MCF 10A (cell line): ENCODE measurements at regions of chr3 and their contacts with region 1.

Region 1: GRCh38 chr3:150763122-150763841 is at the start of gene SIAH2:
- DNase-seq: peak; percentile 93
- H3K4me3 Mint-ChIP-seq: peak within 1 kb of the TSS; percentile 91
- H3K27ac Mint-ChIP-seq: peak within 1 kb of the TSS; percentile 97
- H3K4me1 Mint-ChIP-seq: peaks cover 29% of the 10 kb centered on the region
- H3K27me3 Mint-ChIP-seq: no peaks in the 10 kb centered on the region
- CTCF ChIP-seq: no peak
- total RNA-seq, gene SIAH2: 20.0 and 35.4 TPM in 2 replicates

Region 2: DNA sequence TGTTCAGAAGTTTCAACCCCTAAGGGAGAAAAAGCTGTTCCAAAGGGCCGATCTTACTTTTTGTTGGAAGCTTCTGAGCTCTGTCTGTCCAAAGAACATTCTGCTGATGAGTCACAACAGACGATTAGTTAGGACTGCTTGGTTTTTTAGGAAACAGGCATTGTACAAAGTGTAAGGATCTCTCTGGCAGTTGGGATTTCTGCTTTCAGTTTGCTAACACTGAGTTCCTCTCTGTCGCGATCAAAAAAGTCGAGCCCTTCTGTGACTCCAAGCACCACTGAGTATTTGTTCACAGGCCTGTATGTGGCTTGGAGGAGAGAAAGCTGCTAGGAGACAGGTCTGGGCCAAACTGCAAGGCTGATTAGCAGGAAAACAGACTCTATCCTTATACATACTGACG is 700.8 kb before region 1 on chr3:
- CTCF ChIA-PET with region 1: no interaction called
- POLR2A ChIA-PET with region 1: no interaction called
- intact Hi-C with region 1: no loop called
- DNase-seq: peak; percentile 35
- H3K4me3 Mint-ChIP-seq: peak overlapping the region; percentile 35
- H3K27ac Mint-ChIP-seq: peak overlapping the region; percentile 37
- H3K4me1 Mint-ChIP-seq: peaks cover 7% of the 10 kb centered on the region
- H3K27me3 Mint-ChIP-seq: peaks cover 16% of the 10 kb centered on the region
- CTCF ChIP-seq: no peak

Region 3: GRCh38 chr3:150603153-150603979 is 159.9 kb before region 1 on chr3 and contains the start of gene SELENOT:
- CTCF ChIA-PET with region 1: interaction called, 3 read pairs
- POLR2A ChIA-PET with region 1: interaction called, 32 read pairs
- intact Hi-C with region 1: loop called (anchors 5 kb)
- DNase-seq: peak; percentile 97
- H3K4me3 Mint-ChIP-seq: peak within 1 kb of the TSS; percentile 92
- H3K27ac Mint-ChIP-seq: peak within 1 kb of the TSS; percentile 93
- H3K4me1 Mint-ChIP-seq: peaks cover 39% of the 10 kb centered on the region
- H3K27me3 Mint-ChIP-seq: no peaks in the 10 kb centered on the region
- CTCF ChIP-seq: peak; percentile 13
- total RNA-seq, gene SELENOT: 71.1 and 80.7 TPM in 2 replicates

Region 4: DNA sequence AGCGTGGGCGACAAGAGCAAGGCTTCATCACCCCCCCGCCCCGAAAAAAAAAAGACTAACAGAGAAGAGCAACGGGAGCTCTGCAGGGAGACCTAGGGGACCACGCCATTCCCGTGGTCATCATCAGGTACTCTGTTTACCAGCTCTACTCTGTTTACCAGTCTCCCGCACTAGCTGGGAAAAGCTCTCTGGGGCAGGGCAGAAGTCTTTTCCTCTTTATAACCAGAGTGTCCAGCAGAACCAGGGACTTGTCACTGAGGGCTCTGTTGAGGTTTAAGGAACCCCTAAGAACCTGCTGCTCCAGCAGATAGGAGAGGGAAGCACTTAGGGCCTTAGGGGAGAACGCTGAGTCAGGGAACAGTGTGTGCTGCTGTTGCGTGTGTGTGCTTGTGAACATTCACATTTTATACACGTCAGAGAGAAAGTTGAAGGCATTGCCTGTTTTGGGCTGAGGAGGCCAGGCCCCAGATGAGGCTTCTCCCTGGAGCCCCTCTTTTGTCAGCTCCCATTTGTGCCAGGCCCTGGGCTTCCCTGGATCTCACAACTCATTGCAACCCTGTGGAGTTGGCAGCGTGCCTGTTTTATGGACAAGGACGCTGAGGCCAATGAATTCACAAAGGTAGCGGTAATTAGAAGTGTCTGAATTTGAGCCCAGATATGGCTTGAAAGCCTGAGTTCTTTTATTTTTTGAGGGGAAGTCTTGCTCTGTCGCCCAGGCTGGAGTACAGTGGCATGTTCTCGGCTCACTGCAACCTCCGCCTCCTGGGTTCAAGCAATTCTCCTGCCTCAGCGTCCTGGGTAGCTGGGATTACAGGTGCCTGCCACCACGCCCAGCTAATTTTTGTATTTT is 35.4 kb before region 1 on chr3:
- CTCF ChIA-PET with region 1: interaction called, 59 read pairs
- POLR2A ChIA-PET with region 1: interaction called, 70 read pairs
- intact Hi-C with region 1: no loop called
- DNase-seq: peak; percentile 51
- H3K4me3 Mint-ChIP-seq: no peak overlapping the region
- H3K27ac Mint-ChIP-seq: no peak overlapping the region
- H3K4me1 Mint-ChIP-seq: peaks cover 14% of the 10 kb centered on the region
- H3K27me3 Mint-ChIP-seq: no peaks in the 10 kb centered on the region
- CTCF ChIP-seq: no peak

Region 5: DNA sequence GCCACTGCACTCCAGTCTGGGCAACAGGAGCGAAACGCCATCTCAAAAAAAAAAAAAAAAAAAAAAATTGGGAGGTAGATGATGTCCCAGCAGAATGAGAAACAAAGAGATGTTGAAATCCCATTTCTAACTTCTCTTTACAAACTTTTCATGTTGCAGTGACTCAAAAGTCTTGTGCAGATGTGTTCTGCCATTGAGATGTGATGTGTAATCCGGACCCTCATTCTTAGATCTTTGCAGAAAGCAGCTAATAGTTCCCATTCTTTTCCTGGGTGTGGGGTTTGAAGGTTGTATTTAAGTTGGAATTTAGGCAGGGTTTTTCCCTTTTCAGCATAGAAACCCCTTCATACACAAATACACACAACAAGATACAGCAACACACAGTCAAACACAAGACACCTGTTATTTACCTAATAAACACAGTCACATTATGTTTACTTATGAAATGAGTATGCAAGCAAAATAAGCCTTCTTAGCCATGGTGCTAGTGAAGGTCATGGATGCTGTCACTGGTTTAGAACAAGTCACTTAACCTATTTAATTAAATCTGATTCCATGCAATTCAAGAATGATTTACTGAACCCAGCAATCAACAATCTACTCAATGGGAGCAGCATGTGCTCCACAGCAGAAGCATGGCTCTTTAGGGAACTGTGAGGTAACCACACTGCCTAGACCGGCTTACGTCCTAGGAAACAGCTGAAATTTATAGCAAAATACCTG is 15.2 kb before region 1 on chr3:
- CTCF ChIA-PET with region 1: interaction called, 3 read pairs
- POLR2A ChIA-PET with region 1: interaction called, 12 read pairs
- intact Hi-C with region 1: no loop called
- DNase-seq: no peak
- H3K4me3 Mint-ChIP-seq: no peak overlapping the region
- H3K27ac Mint-ChIP-seq: no peak overlapping the region
- H3K4me1 Mint-ChIP-seq: peaks cover 49% of the 10 kb centered on the region
- H3K27me3 Mint-ChIP-seq: no peaks in the 10 kb centered on the region
- CTCF ChIP-seq: no peak

Region 6: GRCh38 chr3:150787741-150788370 is 24.6 kb after region 1 on chr3:
- CTCF ChIA-PET with region 1: interaction called, 17 read pairs
- POLR2A ChIA-PET with region 1: interaction called, 10 read pairs
- intact Hi-C with region 1: no loop called
- DNase-seq: peak; percentile 57
- H3K4me3 Mint-ChIP-seq: no peak overlapping the region
- H3K27ac Mint-ChIP-seq: no peak overlapping the region
- H3K4me1 Mint-ChIP-seq: peaks cover 8% of the 10 kb centered on the region
- H3K27me3 Mint-ChIP-seq: no peaks in the 10 kb centered on the region
- CTCF ChIP-seq: peak; percentile 52

Region 7: DNA sequence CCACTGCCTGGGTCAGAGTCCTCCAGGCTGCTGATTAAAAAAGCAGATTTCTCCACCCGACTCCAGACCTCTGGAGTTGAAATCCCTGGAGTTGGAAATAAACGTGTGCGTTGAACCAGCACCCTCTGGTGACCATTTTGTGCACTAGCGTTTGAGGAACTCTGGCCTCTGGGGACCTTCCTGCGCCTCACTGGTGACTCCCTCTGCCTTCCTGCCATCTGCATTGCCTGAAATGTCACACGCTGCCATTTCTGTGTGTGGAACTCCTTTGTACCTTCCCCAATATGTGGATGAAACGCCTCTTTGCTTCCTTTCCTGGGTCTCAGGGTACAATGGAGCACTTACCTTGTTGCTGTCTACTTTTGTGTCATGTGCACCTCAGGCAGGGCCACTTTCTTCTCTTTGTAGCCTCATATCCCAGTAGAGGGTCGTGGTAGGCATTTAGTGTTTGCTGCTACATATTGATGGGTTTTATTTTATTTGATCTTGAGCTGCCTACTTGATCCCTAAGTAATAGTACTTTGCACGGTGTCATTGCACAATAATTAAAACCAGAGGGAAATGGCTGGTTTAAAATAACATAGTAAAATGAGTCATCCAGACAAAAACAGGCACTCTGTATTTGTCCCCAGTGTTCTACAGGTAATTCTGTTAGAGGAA is 382.9 kb after region 1 on chr3:
- CTCF ChIA-PET with region 1: interaction called, 8 read pairs
- POLR2A ChIA-PET with region 1: interaction called, 4 read pairs
- intact Hi-C with region 1: loop called (anchors 1 kb)
- DNase-seq: peak; percentile 82
- H3K4me3 Mint-ChIP-seq: no peak overlapping the region
- H3K27ac Mint-ChIP-seq: peak overlapping the region; percentile 28
- H3K4me1 Mint-ChIP-seq: no peaks in the 10 kb centered on the region
- H3K27me3 Mint-ChIP-seq: no peaks in the 10 kb centered on the region
- CTCF ChIP-seq: peak; percentile 90

Region 8: DNA sequence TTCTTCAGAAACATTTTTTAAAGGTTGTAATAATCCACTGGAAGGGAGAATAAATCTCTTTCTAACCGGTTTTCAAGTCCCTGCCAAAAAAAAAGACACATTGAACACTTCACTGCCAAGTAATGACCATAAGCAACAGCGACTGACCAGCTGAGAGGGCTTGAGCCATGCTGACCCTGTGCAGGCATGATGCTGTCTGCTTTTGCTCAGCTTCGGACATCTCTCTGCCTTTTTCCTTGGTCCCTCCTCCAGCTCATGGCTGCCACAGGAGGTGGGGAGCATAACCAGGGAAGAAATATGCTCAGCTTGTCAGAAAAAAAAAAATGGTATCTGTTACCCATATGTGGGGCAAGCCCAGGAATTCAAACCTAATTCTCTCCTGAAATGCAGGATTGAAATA is 696.1 kb after region 1 on chr3:
- CTCF ChIA-PET with region 1: no interaction called
- POLR2A ChIA-PET with region 1: no interaction called
- intact Hi-C with region 1: no loop called
- DNase-seq: no peak
- H3K4me3 Mint-ChIP-seq: no peak overlapping the region
- H3K27ac Mint-ChIP-seq: no peak overlapping the region
- H3K4me1 Mint-ChIP-seq: peaks cover 5% of the 10 kb centered on the region
- H3K27me3 Mint-ChIP-seq: peaks cover 25% of the 10 kb centered on the region
- CTCF ChIP-seq: no peak